Activated CD4-positive, alpha-beta T cell treated with anti-CD3 and anti-CD28 coated beads for 36 hours (primary cell): ENCODE measurements at regions of chr1 and their contacts with region 1.

Region 1: GRCh38 chr1:150235852-150236613 is at the start of gene ANP32E:
- DNase-seq: peak; percentile 96
- ATAC-seq: peak; percentile 91
- H3K4me3 Mint-ChIP-seq: no peak within 1 kb of the TSS
- H3K27ac Mint-ChIP-seq: peak within 1 kb of the TSS; percentile 99
- H3K4me1 Mint-ChIP-seq: peaks cover 14% of the 10 kb centered on the region
- H3K27me3 Mint-ChIP-seq: no peaks in the 10 kb centered on the region
- total RNA-seq, gene ANP32E: 176 to 212 TPM

Region 2: GRCh38 chr1:149886396-149887195 is 349.4 kb before region 1 on chr1:
- CTCF ChIA-PET with region 1: no interaction called
- POLR2A ChIA-PET with region 1: interaction called, 7 read pairs
- intact Hi-C with region 1: loop called in 1 of 2 experiments (anchors 1 kb)
- DNase-seq: peak; percentile 91
- ATAC-seq: peak; percentile 60
- H3K4me3 Mint-ChIP-seq: no peak overlapping the region
- H3K27ac Mint-ChIP-seq: no peak overlapping the region
- H3K4me1 Mint-ChIP-seq: peaks cover 7% of the 10 kb centered on the region
- H3K27me3 Mint-ChIP-seq: no peaks in the 10 kb centered on the region

Region 3: GRCh38 chr1:150121236-150121862 is 114.7 kb before region 1 on chr1:
- CTCF ChIA-PET with region 1: no interaction called
- POLR2A ChIA-PET with region 1: no interaction called
- intact Hi-C with region 1: no loop called
- DNase-seq: no peak
- ATAC-seq: no peak
- H3K4me3 Mint-ChIP-seq: no peak overlapping the region
- H3K27ac Mint-ChIP-seq: no peak overlapping the region
- H3K4me1 Mint-ChIP-seq: peaks cover 14% of the 10 kb centered on the region
- H3K27me3 Mint-ChIP-seq: no peaks in the 10 kb centered on the region

Region 4: GRCh38 chr1:150213170-150214098 is 22.6 kb before region 1 on chr1:
- CTCF ChIA-PET with region 1: no interaction called
- POLR2A ChIA-PET with region 1: interaction called, 5 read pairs
- intact Hi-C with region 1: loop called (anchors 1 kb)
- DNase-seq: peak; percentile 96
- ATAC-seq: peak; percentile 100
- H3K4me3 Mint-ChIP-seq: peak overlapping the region; percentile 73
- H3K27ac Mint-ChIP-seq: peak overlapping the region; percentile 96
- H3K4me1 Mint-ChIP-seq: peaks cover 19% of the 10 kb centered on the region
- H3K27me3 Mint-ChIP-seq: no peaks in the 10 kb centered on the region

Region 5: DNA sequence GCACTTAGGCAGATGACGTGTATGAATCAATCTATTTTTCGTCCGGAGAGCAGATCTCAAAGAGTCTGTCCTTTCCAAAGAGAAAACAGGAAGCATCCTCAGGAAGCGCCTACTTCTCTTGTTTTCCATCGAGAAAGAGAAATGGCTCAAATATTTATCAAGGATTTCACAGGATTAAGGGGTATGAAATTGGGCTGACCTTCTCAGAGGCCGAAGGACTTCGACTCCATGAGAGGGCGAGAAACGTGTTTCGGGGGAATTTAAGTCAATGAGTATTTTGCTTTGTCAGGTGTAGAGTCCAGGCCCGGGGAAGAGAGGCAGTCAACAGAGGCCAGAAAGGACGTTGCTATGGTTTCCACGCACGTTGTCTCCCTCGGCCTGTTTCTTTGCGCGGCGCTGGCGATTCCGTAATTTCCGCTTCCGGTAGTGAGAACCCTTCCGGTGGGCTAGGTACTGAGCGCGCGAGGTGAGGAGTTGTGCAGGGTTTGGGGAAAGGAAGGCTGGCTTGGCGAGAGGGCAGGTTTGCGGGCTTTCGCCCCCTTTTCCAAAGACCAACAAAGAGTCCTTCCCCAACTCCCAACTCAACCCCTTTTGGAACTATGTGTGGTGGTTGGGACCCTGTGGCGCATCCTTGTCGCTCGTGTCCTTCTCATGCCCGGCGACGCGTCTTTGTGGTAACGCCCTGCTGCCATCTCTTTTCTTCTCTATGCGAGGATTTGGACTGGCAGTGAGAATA is 57.6 kb after region 1 on chr1 and contains the start of gene MRPS21:
- CTCF ChIA-PET with region 1: no interaction called
- POLR2A ChIA-PET with region 1: no interaction called
- intact Hi-C with region 1: loop called in 1 of 2 experiments (anchors 1 kb)
- DNase-seq: peak; percentile 93
- ATAC-seq: peak; percentile 99
- H3K4me3 Mint-ChIP-seq: peak within 1 kb of the TSS; percentile 95
- H3K27ac Mint-ChIP-seq: peak within 1 kb of the TSS; percentile 92
- H3K4me1 Mint-ChIP-seq: peaks cover 34% of the 10 kb centered on the region
- H3K27me3 Mint-ChIP-seq: no peaks in the 10 kb centered on the region
- total RNA-seq, gene MRPS21: 86.4 to 111 TPM

Region 6: GRCh38 chr1:150486964-150487762 is 251.1 kb after region 1 on chr1 and contains the start of gene TARS2:
- CTCF ChIA-PET with region 1: no interaction called
- POLR2A ChIA-PET with region 1: no interaction called
- intact Hi-C with region 1: loop called in 1 of 2 experiments (anchors 1 kb)
- DNase-seq: peak; percentile 96
- ATAC-seq: peak; percentile 100
- H3K4me3 Mint-ChIP-seq: peak within 1 kb of the TSS; percentile 96
- H3K27ac Mint-ChIP-seq: peak within 1 kb of the TSS; percentile 99
- H3K4me1 Mint-ChIP-seq: peaks cover 13% of the 10 kb centered on the region
- H3K27me3 Mint-ChIP-seq: no peaks in the 10 kb centered on the region
- total RNA-seq, gene TARS2: 43.8 to 58.6 TPM

Region 7: DNA sequence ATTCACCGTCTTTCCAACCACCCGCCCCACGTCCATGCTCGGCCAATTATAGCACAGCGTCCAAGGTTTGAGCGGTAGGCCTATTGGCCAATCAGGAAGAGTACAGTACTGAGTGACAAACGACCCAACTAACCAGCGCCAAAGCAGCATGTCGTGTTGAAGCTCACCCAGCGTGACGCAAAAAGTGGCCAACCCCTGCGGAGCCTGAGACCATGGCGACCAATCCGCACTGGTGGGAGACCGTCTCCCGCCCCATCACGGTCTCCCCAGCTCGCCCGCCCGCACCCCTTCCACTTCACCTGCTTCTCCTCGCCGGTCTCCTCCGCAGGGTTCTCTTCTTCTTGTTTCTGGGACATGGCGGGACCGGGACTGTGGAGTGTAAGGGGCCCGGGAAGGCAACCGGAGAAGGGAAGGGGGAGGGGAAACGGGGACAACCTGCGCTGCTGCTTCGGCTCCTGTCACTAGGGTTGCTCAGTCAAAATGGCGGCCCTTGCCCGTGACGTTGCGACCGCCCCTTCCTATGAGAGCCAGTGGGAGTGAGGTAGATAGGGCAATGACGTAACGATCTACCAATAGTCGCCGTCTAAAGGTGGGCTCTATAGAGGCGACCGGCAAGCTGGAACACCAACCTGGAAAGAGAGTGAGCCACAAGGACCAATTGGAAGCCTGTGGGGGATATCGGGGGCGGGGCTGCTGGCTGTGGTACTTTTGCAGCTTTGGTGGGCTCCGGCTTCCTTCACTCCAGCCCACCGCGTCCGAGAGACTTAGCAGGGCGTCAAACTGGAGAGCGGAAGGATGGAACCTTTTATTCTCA is 393.3 kb after region 1 on chr1 and contains the start of gene ENSA:
- CTCF ChIA-PET with region 1: no interaction called
- POLR2A ChIA-PET with region 1: no interaction called
- intact Hi-C with region 1: loop called in 1 of 2 experiments (anchors 1 kb)
- DNase-seq: peak; percentile 97
- ATAC-seq: peak; percentile 89
- H3K4me3 Mint-ChIP-seq: no peak within 1 kb of the TSS
- H3K27ac Mint-ChIP-seq: no peak within 1 kb of the TSS
- H3K4me1 Mint-ChIP-seq: peaks cover 29% of the 10 kb centered on the region
- H3K27me3 Mint-ChIP-seq: no peaks in the 10 kb centered on the region
- total RNA-seq, gene ENSA: 197 to 240 TPM